ENCODE measurements at regions of chr12 and their contacts with region 1.

Region 1: GRCh38 chr12:113422030-113422885 is at the start of gene SDSL:
- DNase-seq: peak; percentile 77
- H3K4me3 Mint-ChIP-seq: peak within 1 kb of the TSS; percentile 87
- H3K27ac Mint-ChIP-seq: peak within 1 kb of the TSS; percentile 77
- H3K4me1 Mint-ChIP-seq: peaks cover 32% of the 10 kb centered on the region
- H3K27me3 Mint-ChIP-seq: no peaks in the 10 kb centered on the region
- CTCF ChIP-seq: no peak
- total RNA-seq, gene SDSL: 19.9 and 25.5 TPM in 2 replicates

Region 2: DNA sequence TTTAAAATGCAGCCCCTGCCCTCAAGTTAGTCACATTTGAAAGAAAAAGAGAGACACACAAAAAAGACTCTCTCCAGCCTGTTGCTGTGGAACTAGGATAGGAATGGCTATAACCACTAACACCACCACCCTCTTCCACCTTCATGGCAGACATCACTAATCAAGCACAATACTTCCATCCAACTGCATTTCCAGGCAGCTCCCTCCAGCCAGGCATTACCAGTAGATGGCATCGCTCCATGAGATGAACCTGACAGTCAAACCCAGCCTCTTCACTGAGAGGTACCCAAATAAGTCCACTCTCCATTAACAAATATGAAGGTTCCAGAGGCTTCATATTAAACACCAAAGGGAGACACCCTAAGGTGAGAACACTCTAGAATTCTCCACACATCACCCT is 111.8 kb before region 1 on chr12:
- CTCF ChIA-PET with region 1: no interaction called
- intact Hi-C with region 1: loop called (anchors 1 kb)
- DNase-seq: peak; percentile 25
- H3K4me3 Mint-ChIP-seq: no peak overlapping the region
- H3K27ac Mint-ChIP-seq: no peak overlapping the region
- H3K4me1 Mint-ChIP-seq: no peaks in the 10 kb centered on the region
- H3K27me3 Mint-ChIP-seq: no peaks in the 10 kb centered on the region
- CTCF ChIP-seq: peak; percentile 20

Region 3: GRCh38 chr12:113385282-113385882 is 36.9 kb before region 1 on chr12:
- CTCF ChIA-PET with region 1: no interaction called
- intact Hi-C with region 1: loop called (anchors 2 kb)
- DNase-seq: no peak
- H3K4me3 Mint-ChIP-seq: no peak overlapping the region
- H3K27ac Mint-ChIP-seq: no peak overlapping the region
- H3K4me1 Mint-ChIP-seq: no peaks in the 10 kb centered on the region
- H3K27me3 Mint-ChIP-seq: no peaks in the 10 kb centered on the region
- CTCF ChIP-seq: no peak

Measured in Calu3 (cell line).